Activated B cell treated with CpG ODN at 0.5 μM for 24 hours (primary cell): ENCODE measurements at regions of chr16 and their contacts with region 1.

Region 1: DNA sequence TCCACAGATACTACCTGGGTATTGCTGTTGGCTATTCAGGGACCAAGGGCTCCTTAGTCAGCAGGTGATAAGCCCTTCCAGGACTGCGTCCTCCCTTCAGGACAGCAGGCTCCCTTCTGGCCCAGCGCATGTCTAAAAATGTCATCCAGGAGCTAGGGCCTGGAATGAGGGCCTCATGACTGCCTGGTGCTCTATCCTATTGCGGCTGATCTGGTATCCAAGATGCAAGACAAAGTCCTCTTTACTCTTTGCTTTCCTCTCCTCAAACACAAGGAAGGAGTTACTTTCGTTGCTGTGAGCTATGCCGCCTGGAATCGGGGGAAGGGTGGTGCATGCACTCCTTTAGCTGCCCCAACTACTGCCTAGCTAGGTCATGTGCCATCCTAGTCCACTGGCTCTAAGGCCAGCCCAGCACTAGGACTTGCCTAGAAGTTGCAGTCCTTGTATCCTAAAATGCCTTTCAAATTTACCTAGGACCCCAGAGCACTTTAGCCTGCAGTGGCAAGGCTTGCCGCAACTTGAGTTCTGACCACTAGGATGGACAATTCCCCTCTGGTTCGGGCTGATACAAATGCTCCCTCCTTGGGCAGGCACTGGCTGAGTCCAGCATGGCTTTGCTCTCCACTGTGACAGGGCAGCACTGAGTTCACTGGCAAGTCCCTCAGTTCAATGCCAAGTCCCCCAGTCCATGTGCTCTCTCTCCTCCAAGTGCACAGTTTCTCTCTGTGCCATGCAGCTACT is 10.1 kb upstream of the TMEM219 start:
- DNase-seq: no peak
- ATAC-seq: no peak
- H3K4me3 Mint-ChIP-seq: no peak overlapping the region
- H3K27ac Mint-ChIP-seq: no peak overlapping the region
- H3K4me1 Mint-ChIP-seq: no peaks in the 10 kb centered on the region
- H3K27me3 Mint-ChIP-seq: peaks cover 14% of the 10 kb centered on the region
- CTCF ChIP-seq: no peak

Region 2: GRCh38 chr16:29784901-29785500 is 166.8 kb before region 1 on chr16:
- CTCF ChIA-PET with region 1: no interaction called
- POLR2A ChIA-PET with region 1: interaction called, 14 read pairs
- intact Hi-C with region 1: no loop called
- DNase-seq: peak; percentile 65
- ATAC-seq: peak; percentile 98
- H3K4me3 Mint-ChIP-seq: peak overlapping the region; percentile 68
- H3K27ac Mint-ChIP-seq: peak overlapping the region; percentile 46
- H3K4me1 Mint-ChIP-seq: peaks cover 18% of the 10 kb centered on the region
- H3K27me3 Mint-ChIP-seq: no peaks in the 10 kb centered on the region
- CTCF ChIP-seq: peak; percentile 47